ENCODE measurements at regions of chr9 and their contacts with region 1.

Region 1: GRCh38 chr9:99162759-99163364 is 57.9 kb downstream of the TGFBR1 start:
- DNase-seq: no peak
- ATAC-seq: no peak
- H3K4me3 ChIP-seq: no peak overlapping the region
- H3K27ac ChIP-seq: no peak overlapping the region
- H3K4me1 ChIP-seq: peaks cover 0 to 5% (median 0%) of the 10 kb centered on the region in 9 donors
- H3K27me3 ChIP-seq: peaks cover 0 to 1% (median 0%) of the 10 kb centered on the region in 7 donors
- CTCF ChIP-seq: peak; percentile 12 to 76 (median 61)

Region 2: GRCh38 chr9:100589582-100589981 is 1426.7 kb after region 1 on chr9:
- intact Hi-C with region 1: loop called in 1 of 10 experiments (anchors 10 kb)
- DNase-seq: no peak
- ATAC-seq: no peak
- H3K4me3 ChIP-seq: no peak overlapping the region
- H3K27ac ChIP-seq: no peak overlapping the region
- H3K4me1 ChIP-seq: peaks cover 0 to 15% (median 5%) of the 10 kb centered on the region in 9 donors
- H3K27me3 ChIP-seq: no peaks in the 10 kb centered on the region
- CTCF ChIP-seq: no peak

Measured in heart right ventricle (tissue), 16 donors.